H1 (cell line): ENCODE measurements at regions of chr12 and their contacts with region 1.

Region 1: DNA sequence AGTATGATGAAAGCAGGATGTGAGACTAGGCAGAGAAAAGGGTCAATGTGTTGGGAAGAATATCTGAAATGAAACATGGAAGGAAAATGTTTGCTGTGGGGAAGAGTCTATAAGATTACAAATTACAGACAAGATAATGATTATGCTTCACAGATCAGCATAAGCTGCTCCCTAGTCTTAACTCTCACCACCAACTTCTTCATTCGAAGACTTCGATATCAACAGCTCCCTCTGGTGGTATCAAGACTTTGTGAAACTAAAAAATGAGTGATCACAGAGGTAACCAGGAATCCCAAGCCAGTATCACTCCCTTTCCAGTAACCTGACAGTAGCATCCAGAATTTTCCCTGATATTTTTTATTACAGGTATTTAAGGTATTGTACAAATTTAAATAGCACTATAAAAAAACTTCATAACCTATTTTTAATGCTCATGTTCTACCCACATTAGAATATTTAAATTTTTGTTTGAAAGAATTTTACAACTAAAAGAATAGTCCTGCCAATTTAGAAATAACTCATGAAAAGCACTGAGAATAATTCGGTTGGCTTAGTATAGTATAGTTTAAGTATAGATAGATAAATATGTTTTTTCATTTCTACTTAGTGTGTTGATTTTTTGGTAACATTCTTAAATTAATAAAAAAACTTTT is 84.4 kb downstream of the C2CD5 start:
- DNase-seq: no peak
- H3K4me3 ChIP-seq: no peak overlapping the region
- H3K27ac ChIP-seq: no peak overlapping the region
- H3K4me1 ChIP-seq: no peaks in the 10 kb centered on the region
- H3K27me3 ChIP-seq: no peaks in the 10 kb centered on the region
- CTCF ChIP-seq: peak in 2 of 3 experiments; percentile 40 to 63; a peak in 3 of 4 replicates
- EP300 ChIP-seq: no peak
- POLR2A ChIP-seq: no peak
- RAD21 ChIP-seq: peak; percentile 33 to 50; a peak in 3 of 4 replicates

Region 2: DNA sequence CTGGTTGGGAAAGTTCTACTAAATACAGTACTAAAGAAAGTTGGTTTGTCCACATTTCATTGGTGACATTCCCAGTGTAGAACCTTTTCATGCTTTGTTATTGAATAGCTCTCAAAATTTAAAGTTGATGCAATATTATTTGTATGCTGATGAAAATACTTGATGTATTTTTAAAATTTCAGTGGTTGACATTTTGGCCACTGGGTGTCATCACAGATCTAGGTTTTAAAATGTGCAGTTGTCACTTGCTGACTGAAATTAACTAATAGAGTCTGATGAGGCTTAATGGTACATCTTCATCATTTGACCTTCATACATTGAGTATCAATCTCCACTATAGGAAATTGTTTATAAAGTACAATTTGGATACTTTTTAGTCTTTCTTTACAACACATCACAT is 376.8 kb before region 1 on chr12:
- CTCF ChIA-PET with region 1: interaction called, 26 read pairs
- POLR2A ChIA-PET with region 1: no interaction called
- DNase-seq: no peak
- H3K4me3 ChIP-seq: no peak overlapping the region
- H3K27ac ChIP-seq: no peak overlapping the region
- H3K4me1 ChIP-seq: 0 out of 7 replicates have a peak, but pooled peaks cover 0 to 2% (median 0%) of the 10 kb centered on the region in 4 experiments
- H3K27me3 ChIP-seq: no peaks in the 10 kb centered on the region
- CTCF ChIP-seq: peak in 2 of 3 experiments; percentile 12 to 38; a peak in 2 of 4 replicates
- EP300 ChIP-seq: no peak
- POLR2A ChIP-seq: no peak
- RAD21 ChIP-seq: peak; percentile 61 to 66

Region 3: DNA sequence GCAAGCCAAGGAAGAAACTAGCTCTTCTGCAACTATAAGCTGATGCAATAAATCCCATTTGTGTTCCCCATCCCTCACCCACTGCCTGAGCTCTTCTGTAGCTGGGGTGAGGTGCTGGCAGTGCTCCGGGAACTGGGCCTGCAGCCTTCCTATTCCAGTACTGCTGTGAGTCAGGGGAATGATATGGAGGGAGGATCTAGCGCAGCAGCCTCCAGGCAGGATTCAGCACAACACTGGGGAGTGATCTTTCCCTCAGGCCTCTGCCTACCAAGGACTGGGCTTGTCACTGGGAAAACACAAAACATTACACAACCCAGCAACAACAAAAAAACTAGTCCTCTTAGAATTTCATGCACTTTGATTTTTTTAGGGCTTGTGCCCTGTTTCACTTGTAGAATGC is 184.1 kb before region 1 on chr12:
- CTCF ChIA-PET with region 1: no interaction called
- POLR2A ChIA-PET with region 1: no interaction called
- DNase-seq: peak in 1 of 2 experiments; percentile 31
- H3K4me3 ChIP-seq: no peak overlapping the region
- H3K27ac ChIP-seq: no peak overlapping the region
- H3K4me1 ChIP-seq: no peaks in the 10 kb centered on the region
- H3K27me3 ChIP-seq: no peaks in the 10 kb centered on the region
- CTCF ChIP-seq: no peak
- EP300 ChIP-seq: no peak
- POLR2A ChIP-seq: no peak
- RAD21 ChIP-seq: no peak

Region 4: DNA sequence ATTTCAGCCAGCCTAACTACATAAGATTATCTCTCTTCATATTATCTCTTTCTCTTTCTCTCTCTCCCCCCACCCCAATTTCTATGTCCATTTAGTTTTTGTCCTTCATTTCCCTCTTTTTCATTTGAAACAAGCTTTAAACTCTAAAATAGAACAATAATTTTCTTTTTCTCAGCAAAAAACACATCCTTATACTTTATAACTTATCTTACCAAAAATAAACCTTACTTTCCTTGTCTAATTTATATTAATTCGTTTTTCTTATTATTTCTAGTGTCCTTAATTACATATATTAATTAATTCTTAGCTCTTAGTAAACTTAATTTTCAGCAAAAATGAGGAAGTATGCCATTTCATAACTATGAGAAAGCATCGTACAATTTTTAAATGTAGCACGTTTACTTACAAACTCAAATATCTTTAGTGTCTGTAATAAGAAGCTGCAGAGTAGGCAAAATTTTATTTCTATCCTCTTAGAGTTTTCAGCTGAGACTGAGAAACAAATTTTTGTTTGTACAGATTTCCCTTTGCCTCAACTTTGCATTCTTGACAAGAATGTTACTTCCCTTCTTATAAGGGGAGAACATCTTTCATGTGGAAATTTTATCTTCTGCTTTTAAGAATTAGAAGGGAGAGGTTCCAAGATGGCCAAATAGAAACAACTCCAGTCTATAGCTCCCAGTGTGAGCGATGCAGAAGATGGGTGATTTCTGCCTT is 60.3 kb before region 1 on chr12:
- CTCF ChIA-PET with region 1: no interaction called
- POLR2A ChIA-PET with region 1: no interaction called
- DNase-seq: no peak
- H3K4me3 ChIP-seq: no peak overlapping the region
- H3K27ac ChIP-seq: no peak overlapping the region
- H3K4me1 ChIP-seq: no peaks in the 10 kb centered on the region
- H3K27me3 ChIP-seq: no peaks in the 10 kb centered on the region
- CTCF ChIP-seq: no peak
- EP300 ChIP-seq: no peak
- POLR2A ChIP-seq: no peak
- RAD21 ChIP-seq: no peak

Region 5: GRCh38 chr12:22443379-22444316 is 16.3 kb before region 1 on chr12:
- CTCF ChIA-PET with region 1: interaction called, 20 read pairs
- POLR2A ChIA-PET with region 1: interaction called, 4 read pairs
- DNase-seq: peak; percentile 39 to 52
- H3K4me3 ChIP-seq: no peak overlapping the region
- H3K27ac ChIP-seq: no peak overlapping the region
- H3K4me1 ChIP-seq: no peaks in the 10 kb centered on the region
- H3K27me3 ChIP-seq: no peaks in the 10 kb centered on the region
- CTCF ChIP-seq: peak; percentile 51 to 93 (median 91)
- EP300 ChIP-seq: no peak
- POLR2A ChIP-seq: no peak
- RAD21 ChIP-seq: peak; percentile 96 to 99

Region 6: GRCh38 chr12:22473212-22473611 is 13.2 kb after region 1 on chr12:
- CTCF ChIA-PET with region 1: interaction called, 11 read pairs
- POLR2A ChIA-PET with region 1: no interaction called
- DNase-seq: no peak
- H3K4me3 ChIP-seq: no peak overlapping the region
- H3K27ac ChIP-seq: no peak overlapping the region
- H3K4me1 ChIP-seq: no peaks in the 10 kb centered on the region
- H3K27me3 ChIP-seq: no peaks in the 10 kb centered on the region
- CTCF ChIP-seq: no peak
- EP300 ChIP-seq: no peak
- POLR2A ChIP-seq: no peak
- RAD21 ChIP-seq: no peak

Region 7: DNA sequence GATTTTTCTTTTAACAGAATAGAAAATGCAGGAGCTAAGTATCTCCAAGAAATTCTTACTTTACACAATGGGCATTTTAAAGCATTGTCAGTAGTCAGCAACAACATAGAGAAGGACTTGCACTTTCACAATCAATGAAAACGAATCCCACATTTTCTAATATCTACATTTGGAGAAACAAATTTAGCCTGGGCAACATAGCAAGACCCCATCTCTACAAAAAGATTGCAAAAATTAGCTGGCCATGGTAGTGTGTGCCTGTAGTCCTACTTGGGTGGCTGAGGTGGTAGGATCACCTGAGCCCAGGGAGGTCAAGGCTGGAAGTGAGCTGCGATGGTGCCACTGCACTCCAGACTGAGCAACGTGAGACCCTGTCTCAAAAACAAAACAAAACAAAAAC is 115.0 kb after region 1 on chr12:
- CTCF ChIA-PET with region 1: no interaction called
- POLR2A ChIA-PET with region 1: no interaction called
- DNase-seq: no peak
- H3K4me3 ChIP-seq: no peak overlapping the region
- H3K27ac ChIP-seq: no peak overlapping the region
- H3K4me1 ChIP-seq: no peaks in the 10 kb centered on the region
- H3K27me3 ChIP-seq: no peaks in the 10 kb centered on the region
- CTCF ChIP-seq: no peak
- EP300 ChIP-seq: no peak
- POLR2A ChIP-seq: no peak
- RAD21 ChIP-seq: no peak